ENCODE measurements at regions of chr5 and their contacts with region 1.

Region 1: DNA sequence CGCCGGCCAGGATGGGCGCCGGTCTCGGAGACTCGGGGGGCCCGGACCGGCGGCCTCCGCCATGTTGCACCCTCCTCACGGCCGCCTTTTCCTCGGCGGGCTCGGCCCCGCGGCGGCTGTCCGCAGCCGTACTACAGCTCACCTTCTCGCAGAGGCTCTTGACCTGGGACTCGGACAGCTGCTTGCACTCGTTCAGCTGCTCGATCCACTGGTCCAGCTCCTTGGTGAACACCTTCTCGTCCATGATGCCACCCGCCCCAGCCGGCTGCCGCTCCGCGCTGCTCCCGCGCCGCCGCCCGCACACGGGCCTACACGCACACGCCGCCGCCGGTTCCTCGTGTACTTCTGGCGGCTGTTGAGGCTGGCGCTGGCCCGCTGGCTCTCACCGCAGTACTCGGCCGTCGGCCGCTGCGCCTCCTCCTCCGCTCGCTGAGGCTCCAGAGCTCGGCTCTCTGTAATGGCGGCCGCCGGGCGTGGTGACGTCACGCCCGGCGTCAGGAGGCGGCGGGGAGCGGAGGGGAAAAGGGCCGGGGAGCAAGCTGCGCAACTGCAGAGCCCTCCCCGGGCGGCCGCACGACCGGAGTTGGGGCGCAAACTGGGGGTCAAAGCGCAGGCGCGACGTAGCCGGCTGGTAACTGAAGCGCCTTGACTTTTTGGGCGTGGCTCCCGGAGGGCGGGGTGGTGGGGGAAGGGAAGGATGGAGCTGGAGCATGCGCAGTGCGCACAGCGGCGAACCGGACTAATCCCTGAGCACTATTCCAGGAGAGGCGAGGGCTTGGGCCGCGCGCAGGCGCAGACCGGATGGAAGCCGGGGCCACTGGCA is at the start of gene PPP2CA:
- DNase-seq: peak; percentile 93 to 98
- ATAC-seq: peak; percentile 88 to 94
- H3K4me3 ChIP-seq: peak within 1 kb of the TSS; percentile 78
- H3K27ac ChIP-seq: peak within 1 kb of the TSS; percentile 92 to 98
- H3K4me1 ChIP-seq: peaks cover 34% of the 10 kb centered on the region
- CTCF ChIP-seq: no peak
- EP300 ChIP-seq: no peak
- POLR2A ChIP-seq: peak; percentile 76
- RAD21 ChIP-seq: no peak; a peak in 2 of 5 replicates
- polyA plus RNA-seq, gene PPP2CA: 233 and 357 TPM in 2 replicates

Region 2: GRCh38 chr5:134004592-134005375 is 221.0 kb before region 1 on chr5 and contains the start of gene VDAC1:
- CTCF ChIA-PET with region 1: no interaction called
- POLR2A ChIA-PET with region 1: interaction called, 15 read pairs
- DNase-seq: peak; percentile 85 to 88
- ATAC-seq: peak; percentile 83 to 85
- H3K4me3 ChIP-seq: peak within 1 kb of the TSS; percentile 90
- H3K27ac ChIP-seq: peak within 1 kb of the TSS; percentile 98
- H3K4me1 ChIP-seq: peaks cover 56% of the 10 kb centered on the region
- CTCF ChIP-seq: no peak
- EP300 ChIP-seq: no peak
- POLR2A ChIP-seq: peak; percentile 84
- RAD21 ChIP-seq: no peak
- polyA plus RNA-seq, gene VDAC1: 300 and 369 TPM in 2 replicates

Region 3: GRCh38 chr5:134184155-134185135 is 41.4 kb before region 1 on chr5:
- CTCF ChIA-PET with region 1: interaction called, 10 read pairs
- POLR2A ChIA-PET with region 1: interaction called, 4 read pairs
- DNase-seq: peak; percentile 73 to 87
- ATAC-seq: peak; percentile 87 to 95
- H3K4me3 ChIP-seq: no peak overlapping the region
- H3K27ac ChIP-seq: no peak overlapping the region
- H3K4me1 ChIP-seq: no peaks in the 10 kb centered on the region
- CTCF ChIP-seq: peak; percentile 90
- EP300 ChIP-seq: no peak
- POLR2A ChIP-seq: no peak
- RAD21 ChIP-seq: peak; percentile 94 to 97

Region 4: GRCh38 chr5:134215757-134216156 is 10.1 kb before region 1 on chr5:
- CTCF ChIA-PET with region 1: interaction called, 10 read pairs
- POLR2A ChIA-PET with region 1: interaction called, 4 read pairs
- DNase-seq: no peak
- ATAC-seq: no peak
- H3K4me3 ChIP-seq: no peak overlapping the region
- H3K27ac ChIP-seq: no peak overlapping the region
- H3K4me1 ChIP-seq: peaks cover 12% of the 10 kb centered on the region; the same call in 1 of the 3 replicates
- CTCF ChIP-seq: no peak
- EP300 ChIP-seq: no peak
- POLR2A ChIP-seq: no peak
- RAD21 ChIP-seq: no peak

Region 5: GRCh38 chr5:134249469-134250379 is 23.9 kb after region 1 on chr5:
- CTCF ChIA-PET with region 1: interaction called, 10 read pairs
- POLR2A ChIA-PET with region 1: interaction called, 52 read pairs
- DNase-seq: peak in 1 of 2 experiments; percentile 45
- ATAC-seq: 0 out of 6 replicates have a peak, but pooled peaks of 1 of the 2 experiments have one; percentile 7
- H3K4me3 ChIP-seq: no peak overlapping the region
- H3K27ac ChIP-seq: peak overlapping the region; percentile 10 to 35; a peak in 4 of 6 replicates
- H3K4me1 ChIP-seq: peaks cover 57% of the 10 kb centered on the region
- CTCF ChIP-seq: no peak
- EP300 ChIP-seq: no peak
- POLR2A ChIP-seq: no peak
- RAD21 ChIP-seq: no peak

Region 6: DNA sequence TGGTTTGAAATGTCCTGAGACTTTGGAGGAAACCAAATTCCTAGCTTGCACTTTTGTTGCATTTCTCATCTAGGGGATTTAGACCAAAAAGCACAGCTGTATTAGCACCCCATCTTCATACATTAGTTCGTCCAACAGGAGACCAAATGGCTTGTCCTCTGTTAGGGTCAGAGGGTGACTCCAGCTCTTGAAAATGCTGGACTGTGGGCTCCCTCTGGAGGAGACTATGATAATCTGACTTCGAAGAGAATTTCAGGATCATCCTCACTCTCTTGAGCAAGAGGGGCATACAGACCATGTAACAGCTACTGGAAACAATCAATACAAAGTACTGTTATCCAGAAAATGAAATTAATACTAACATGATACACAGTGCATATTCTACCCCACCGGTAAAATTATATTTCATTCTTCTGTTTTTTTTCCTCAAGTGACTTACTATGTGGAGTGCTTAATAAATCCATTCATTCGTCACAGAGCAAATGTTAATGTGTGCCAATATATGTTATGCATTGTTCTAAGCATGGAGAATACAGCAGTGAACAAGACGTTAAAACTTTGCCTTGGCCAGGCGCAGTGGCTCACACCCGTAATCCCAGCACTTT is 63.8 kb after region 1 on chr5:
- CTCF ChIA-PET with region 1: interaction called, 19 read pairs
- POLR2A ChIA-PET with region 1: interaction called, 15 read pairs
- DNase-seq: peak; percentile 75 to 87
- ATAC-seq: peak; percentile 99
- H3K4me3 ChIP-seq: no peak overlapping the region
- H3K27ac ChIP-seq: no peak overlapping the region
- H3K4me1 ChIP-seq: no peaks in the 10 kb centered on the region; the same call in 2 of the 3 replicates
- CTCF ChIP-seq: peak; percentile 97
- EP300 ChIP-seq: no peak
- POLR2A ChIP-seq: no peak
- RAD21 ChIP-seq: peak; percentile 99

Region 7: DNA sequence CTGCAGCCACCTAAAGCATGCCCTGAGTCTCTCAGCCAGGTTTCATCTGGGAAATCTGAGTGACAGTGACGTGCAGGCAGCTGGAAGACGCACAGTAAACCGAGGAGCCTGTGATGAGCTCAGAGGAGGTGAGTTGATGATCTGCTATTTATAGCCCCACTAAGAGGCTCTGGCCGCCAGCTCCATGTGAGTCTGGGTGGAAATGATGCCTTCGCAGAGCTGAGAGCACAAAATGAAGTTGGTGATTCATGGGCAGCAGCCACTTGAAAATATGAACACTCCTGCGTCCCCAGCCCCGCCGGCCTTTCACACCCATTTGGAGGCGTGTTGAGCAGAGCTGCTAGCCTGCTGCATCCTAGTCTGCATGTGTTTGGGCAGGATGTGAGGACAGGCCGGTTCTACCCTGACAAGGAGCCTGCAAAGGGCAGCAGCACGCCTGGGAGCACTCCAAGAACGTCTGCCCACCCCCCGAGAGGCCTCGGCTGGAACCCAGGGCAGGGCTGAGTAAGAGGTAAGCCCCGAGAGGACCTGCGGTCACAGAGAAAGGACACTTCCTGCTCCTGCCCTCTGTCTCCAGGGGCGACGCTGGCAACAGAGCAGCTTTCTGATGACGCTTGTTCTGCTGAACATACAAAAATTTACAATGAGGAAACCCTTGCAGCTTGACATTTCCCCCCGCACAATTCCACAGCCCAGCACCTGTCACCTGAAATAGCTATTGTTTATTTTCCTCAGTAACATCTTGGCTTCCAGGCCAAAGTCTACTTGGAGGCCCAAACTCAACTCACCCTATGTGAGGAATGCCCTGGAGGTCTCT is 210.9 kb after region 1 on chr5:
- CTCF ChIA-PET with region 1: no interaction called
- POLR2A ChIA-PET with region 1: no interaction called
- DNase-seq: peak; percentile 41 to 75
- ATAC-seq: peak; percentile 81
- H3K4me3 ChIP-seq: no peak overlapping the region
- H3K27ac ChIP-seq: peak overlapping the region; percentile 55 to 89
- H3K4me1 ChIP-seq: peaks cover 53% of the 10 kb centered on the region
- CTCF ChIP-seq: no peak
- EP300 ChIP-seq: no peak
- POLR2A ChIP-seq: no peak
- RAD21 ChIP-seq: no peak